ENCODE measurements at regions of chr1 and their contacts with region 1.

Region 1: DNA sequence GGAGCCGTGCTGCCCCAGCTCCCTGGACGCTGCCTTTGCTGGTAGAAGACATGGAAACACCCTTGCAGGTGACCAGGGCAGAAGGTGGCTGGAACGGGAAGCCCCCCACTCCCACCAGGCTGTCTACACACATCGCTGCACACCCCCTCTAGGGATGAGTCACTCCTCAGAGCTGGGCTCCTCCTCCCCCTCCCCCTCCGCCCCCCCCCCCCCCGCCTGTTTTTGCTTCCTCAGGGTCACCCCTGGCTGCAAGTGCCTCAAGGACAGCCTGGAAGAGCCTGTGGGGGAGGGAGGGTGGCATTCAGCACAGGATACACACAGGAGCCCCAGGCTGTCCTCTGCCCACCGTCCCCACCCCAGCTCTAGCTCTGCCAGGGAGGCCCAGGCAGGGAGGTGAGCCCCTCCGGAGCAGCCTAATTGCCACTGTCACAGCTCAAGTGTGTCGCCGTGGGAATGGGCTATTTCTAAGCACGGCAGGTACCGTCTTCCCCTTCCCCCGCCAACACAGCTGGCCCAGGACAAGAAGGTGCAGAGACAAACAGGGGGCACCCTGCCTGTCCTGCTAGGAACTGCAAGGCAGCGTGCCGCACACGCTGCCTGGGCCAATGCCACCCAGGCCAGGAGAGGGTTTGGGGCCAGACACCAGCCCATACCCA is 2.5 kb downstream of the FNDC10 start:
- DNase-seq: no peak

Region 2: GRCh38 chr1:1615256-1616044 is 18.0 kb after region 1 on chr1 and contains the start of gene MIB2:
- CTCF ChIA-PET with region 1: no interaction called
- POLR2A ChIA-PET with region 1: interaction called, 33 read pairs
- DNase-seq: peak; percentile 100